CD8-positive, alpha-beta T cell (primary cell): ENCODE measurements at regions of chrX and their contacts with region 1.

Region 1: DNA sequence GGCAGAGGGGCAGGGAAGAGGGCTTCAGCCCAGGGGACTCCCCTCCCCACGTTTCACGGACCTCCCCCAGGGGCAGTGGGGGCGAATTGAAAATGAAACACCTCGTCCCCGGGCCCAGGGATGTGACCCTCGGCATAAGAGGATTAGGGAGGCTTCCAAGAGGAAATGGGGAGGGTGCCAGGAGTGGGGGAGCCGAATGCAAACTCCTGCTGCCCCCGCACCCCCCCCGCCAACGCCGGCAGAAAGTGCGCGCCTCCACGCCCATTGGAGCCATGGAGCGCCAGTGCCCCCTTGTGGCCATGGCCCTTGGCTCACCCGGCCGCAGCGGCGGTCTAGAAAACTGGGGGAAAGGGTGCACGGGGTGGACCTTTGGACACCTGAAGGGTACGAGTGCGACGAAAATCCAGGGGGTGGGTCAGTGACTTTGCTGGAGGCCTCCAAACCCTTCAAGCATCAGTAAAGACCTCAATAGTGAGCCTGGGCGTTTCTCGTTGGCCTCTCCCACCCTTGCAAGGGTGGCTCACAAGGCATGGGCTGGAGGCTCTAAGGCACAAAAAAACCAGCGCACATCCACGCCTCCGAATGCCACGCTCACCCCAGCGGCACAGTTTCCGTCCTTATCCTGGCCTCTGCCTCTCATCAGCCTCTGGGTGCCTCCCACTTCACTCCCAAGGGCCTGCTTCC is 120.8 kb upstream of the PJA1 start:
- DNase-seq: peak; percentile 12 to 78 (median 53)
- ATAC-seq: peak; percentile 57
- H3K4me3 ChIP-seq: peak overlapping the region; percentile 32 to 33
- H3K4me3 Mint-ChIP-seq: peak overlapping the region; percentile 43
- H3K27ac ChIP-seq: no peak overlapping the region
- H3K27ac Mint-ChIP-seq: no peak overlapping the region
- H3K4me1 ChIP-seq: no peaks in the 10 kb centered on the region
- H3K4me1 Mint-ChIP-seq: no peaks in the 10 kb centered on the region
- H3K27me3 ChIP-seq: no peaks in the 10 kb centered on the region
- H3K27me3 Mint-ChIP-seq: no peaks in the 10 kb centered on the region
- CTCF ChIP-seq: peak; percentile 51

Region 2: DNA sequence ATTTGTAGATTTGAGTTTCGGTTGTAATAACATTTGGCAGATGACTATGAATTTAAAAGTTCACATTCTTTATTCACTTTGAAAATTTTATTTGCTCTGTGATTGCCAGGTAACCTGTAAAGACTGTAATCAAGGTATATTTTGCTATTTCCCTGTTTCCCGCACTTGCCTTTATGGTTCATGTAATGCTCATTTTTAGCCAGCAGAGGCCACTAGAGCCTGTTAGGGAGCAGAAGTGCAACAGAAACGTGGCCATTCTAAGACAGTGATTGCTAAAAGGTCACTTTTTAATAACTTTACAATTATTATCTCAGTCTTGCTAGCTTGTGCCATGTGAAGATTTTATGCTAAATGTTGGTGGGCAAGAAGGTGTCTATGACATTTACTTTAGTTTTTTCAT is 774.8 kb before region 1 on chrX:
- CTCF ChIA-PET with region 1: no interaction called
- POLR2A ChIA-PET with region 1: no interaction called
- intact Hi-C with region 1: loop called in 1 of 2 experiments (anchors 5 kb)
- DNase-seq: peak in 3 of 9 experiments; percentile 33 to 57 (median 49)
- ATAC-seq: peak; percentile 39
- H3K4me3 ChIP-seq: no peak overlapping the region
- H3K4me3 Mint-ChIP-seq: no peak overlapping the region
- H3K27ac ChIP-seq: no peak overlapping the region
- H3K27ac Mint-ChIP-seq: no peak overlapping the region
- H3K4me1 ChIP-seq: peaks cover 3% of the 10 kb centered on the region
- H3K4me1 Mint-ChIP-seq: peaks cover 27% of the 10 kb centered on the region
- H3K27me3 ChIP-seq: no peaks in the 10 kb centered on the region
- H3K27me3 Mint-ChIP-seq: no peaks in the 10 kb centered on the region
- CTCF ChIP-seq: peak; percentile 73

Region 3: DNA sequence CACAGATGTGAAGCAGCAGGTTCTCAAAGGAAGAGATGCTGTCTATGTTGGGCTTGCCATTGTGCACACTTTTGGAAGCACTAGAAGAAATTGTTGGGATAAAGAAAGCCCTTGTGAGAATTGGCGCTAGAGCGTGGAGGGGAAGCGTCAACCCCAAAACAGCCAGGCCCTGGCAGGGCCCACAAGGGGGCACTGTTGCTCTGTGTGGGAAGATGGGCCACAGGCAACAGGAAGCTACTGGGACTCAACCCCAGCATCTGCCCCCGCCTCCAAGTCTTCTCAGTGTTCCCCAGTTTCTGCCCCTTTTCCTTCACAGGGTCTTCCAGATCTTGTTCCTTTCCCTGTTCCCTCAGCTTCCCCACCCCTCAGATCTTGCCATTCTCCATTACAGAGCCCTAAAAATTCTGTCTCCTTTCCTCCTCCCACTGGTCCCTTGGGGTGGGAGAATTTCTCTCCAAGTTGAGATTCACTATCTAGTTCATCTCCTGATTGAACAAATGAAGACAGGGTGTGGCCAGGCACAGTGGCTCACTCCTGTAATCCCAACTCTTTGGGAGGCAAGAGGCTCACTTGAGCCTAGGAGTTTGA is 553.0 kb before region 1 on chrX:
- CTCF ChIA-PET with region 1: no interaction called
- POLR2A ChIA-PET with region 1: no interaction called
- intact Hi-C with region 1: loop called in 1 of 2 experiments (anchors 5 kb)
- DNase-seq: peak; percentile 14 to 70 (median 48)
- ATAC-seq: no peak
- H3K4me3 ChIP-seq: no peak overlapping the region
- H3K4me3 Mint-ChIP-seq: no peak overlapping the region
- H3K27ac ChIP-seq: no peak overlapping the region
- H3K27ac Mint-ChIP-seq: no peak overlapping the region
- H3K4me1 ChIP-seq: no peaks in the 10 kb centered on the region
- H3K4me1 Mint-ChIP-seq: no peaks in the 10 kb centered on the region
- H3K27me3 ChIP-seq: no peaks in the 10 kb centered on the region
- H3K27me3 Mint-ChIP-seq: peaks cover 11% of the 10 kb centered on the region
- CTCF ChIP-seq: peak; percentile 27

Region 4: DNA sequence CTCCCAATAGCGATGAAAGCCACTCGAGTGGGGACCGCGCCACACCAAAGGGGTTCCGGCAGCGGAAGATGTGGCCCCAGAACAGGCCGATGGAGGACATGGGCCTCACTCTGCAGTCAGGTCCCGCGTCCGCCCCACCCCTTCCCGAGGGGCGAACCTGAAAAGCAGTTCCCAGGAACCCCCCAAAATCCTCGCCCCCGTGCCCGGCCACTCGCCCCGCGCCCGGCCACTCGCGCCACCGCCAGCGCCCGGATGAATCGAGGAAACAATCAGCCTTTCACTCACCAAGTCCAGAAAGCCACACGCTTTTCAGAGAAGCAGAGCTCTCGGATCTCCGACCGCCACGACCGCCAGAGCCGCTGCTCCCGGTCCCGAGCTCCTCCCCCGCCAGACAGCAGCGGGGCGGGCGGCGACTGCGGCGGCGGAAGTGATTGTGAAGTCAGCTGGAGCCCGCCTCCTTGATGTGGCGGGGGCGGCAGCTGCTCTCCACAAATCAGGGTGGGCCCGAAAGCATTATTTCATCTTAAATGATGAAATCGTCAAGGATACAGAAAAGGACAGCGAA is 120.9 kb before region 1 on chrX and contains the start of gene PJA1:
- CTCF ChIA-PET with region 1: no interaction called
- POLR2A ChIA-PET with region 1: no interaction called
- intact Hi-C with region 1: loop called in 1 of 2 experiments (anchors 10 kb)
- DNase-seq: peak; percentile 48 to 83 (median 72)
- ATAC-seq: peak; percentile 75
- H3K4me3 ChIP-seq: peak within 1 kb of the TSS; percentile 74
- H3K4me3 Mint-ChIP-seq: peak within 1 kb of the TSS; percentile 92
- H3K27ac ChIP-seq: peak within 1 kb of the TSS; percentile 73 to 74
- H3K27ac Mint-ChIP-seq: peak within 1 kb of the TSS; percentile 93
- H3K4me1 ChIP-seq: peaks cover 30% of the 10 kb centered on the region
- H3K4me1 Mint-ChIP-seq: peaks cover 35% of the 10 kb centered on the region
- H3K27me3 ChIP-seq: no peaks in the 10 kb centered on the region
- H3K27me3 Mint-ChIP-seq: no peaks in the 10 kb centered on the region
- CTCF ChIP-seq: no peak
- total RNA-seq, gene PJA1: 36.5 to 38.7 TPM